Caco-2 (cell line): ENCODE measurements at regions of chr6 and their contacts with region 1.

Region 1: DNA sequence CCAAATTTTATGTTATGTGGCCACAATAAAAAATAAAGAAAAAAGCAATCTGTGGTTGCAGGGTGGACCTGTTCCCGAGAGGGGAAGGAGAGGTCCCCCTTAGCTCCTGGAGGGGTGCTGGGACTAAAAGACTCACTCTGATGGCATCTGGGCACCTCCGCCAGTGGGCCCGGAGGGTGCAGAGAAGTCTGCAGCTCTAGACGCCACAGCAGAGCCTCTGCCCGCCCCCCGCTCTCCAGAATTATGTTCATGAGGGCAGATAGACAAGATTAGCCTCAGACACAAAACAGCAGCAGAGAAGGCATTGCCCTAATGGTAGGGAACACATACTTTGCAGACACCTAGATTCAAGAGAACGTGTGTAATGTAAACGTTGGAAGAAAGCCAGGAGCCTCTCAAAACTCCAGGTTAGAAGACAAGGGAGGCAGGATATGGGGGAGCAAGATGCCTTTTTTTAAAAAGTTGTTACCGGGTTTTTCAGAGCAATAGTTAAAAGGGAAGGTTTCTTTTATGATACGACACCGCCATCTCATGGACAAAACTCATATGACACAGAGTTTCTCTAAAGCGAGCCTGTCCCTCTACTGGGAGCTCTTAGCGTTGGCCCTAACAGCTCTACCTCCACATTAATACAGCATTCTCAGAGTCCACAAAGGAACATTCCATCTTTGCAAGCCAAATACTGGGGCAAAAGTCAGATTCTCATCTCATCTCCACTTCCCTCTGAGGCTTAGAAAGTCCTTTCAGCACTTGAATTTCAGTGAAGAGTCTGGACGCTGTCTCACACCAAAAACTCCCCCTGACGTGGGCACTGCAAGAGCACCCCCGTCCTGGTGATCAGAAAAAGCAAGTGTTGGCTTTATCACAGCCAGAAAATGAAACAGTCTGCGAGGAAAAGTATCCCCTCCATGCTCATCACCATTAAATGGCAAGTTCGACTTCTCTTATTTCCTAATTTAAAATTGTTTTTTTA is 47.2 kb downstream of the FOXF2 start:
- DNase-seq: peak; percentile 50 to 75
- H3K4me3 ChIP-seq: no peak overlapping the region
- H3K4me3 Mint-ChIP-seq: no peak overlapping the region
- H3K27ac Mint-ChIP-seq: no peak overlapping the region
- H3K4me1 ChIP-seq: no peaks in the 10 kb centered on the region
- H3K4me1 Mint-ChIP-seq: peaks cover 14% of the 10 kb centered on the region
- H3K27me3 ChIP-seq: no peaks in the 10 kb centered on the region; the same call in 1 of the 2 replicates
- H3K27me3 Mint-ChIP-seq: peaks cover 19% of the 10 kb centered on the region
- CTCF ChIP-seq: peak; percentile 76 to 84

Region 2: GRCh38 chr6:593139-593906 is 843.3 kb before region 1 on chr6:
- CTCF ChIA-PET with region 1: interaction called, 4 read pairs
- POLR2A ChIA-PET with region 1: no interaction called
- intact Hi-C with region 1: loop called (anchors 10 kb)
- DNase-seq: peak; percentile 41 to 55
- H3K4me3 ChIP-seq: no peak overlapping the region
- H3K4me3 Mint-ChIP-seq: no peak overlapping the region
- H3K27ac Mint-ChIP-seq: no peak overlapping the region
- H3K4me1 ChIP-seq: no peaks in the 10 kb centered on the region
- H3K4me1 Mint-ChIP-seq: no peaks in the 10 kb centered on the region
- H3K27me3 ChIP-seq: no peaks in the 10 kb centered on the region
- H3K27me3 Mint-ChIP-seq: no peaks in the 10 kb centered on the region
- CTCF ChIP-seq: peak; percentile 47 to 52

Region 3: GRCh38 chr6:797479-798077 is 639.0 kb before region 1 on chr6:
- CTCF ChIA-PET with region 1: interaction called, 3 read pairs
- POLR2A ChIA-PET with region 1: no interaction called
- intact Hi-C with region 1: loop called (anchors 5 kb)
- DNase-seq: peak in 1 of 2 experiments; percentile 60
- H3K4me3 ChIP-seq: no peak overlapping the region
- H3K4me3 Mint-ChIP-seq: no peak overlapping the region
- H3K27ac Mint-ChIP-seq: no peak overlapping the region
- H3K4me1 ChIP-seq: no peaks in the 10 kb centered on the region
- H3K4me1 Mint-ChIP-seq: no peaks in the 10 kb centered on the region
- H3K27me3 ChIP-seq: no peaks in the 10 kb centered on the region
- H3K27me3 Mint-ChIP-seq: no peaks in the 10 kb centered on the region
- CTCF ChIP-seq: peak; percentile 73 to 74

Region 4: DNA sequence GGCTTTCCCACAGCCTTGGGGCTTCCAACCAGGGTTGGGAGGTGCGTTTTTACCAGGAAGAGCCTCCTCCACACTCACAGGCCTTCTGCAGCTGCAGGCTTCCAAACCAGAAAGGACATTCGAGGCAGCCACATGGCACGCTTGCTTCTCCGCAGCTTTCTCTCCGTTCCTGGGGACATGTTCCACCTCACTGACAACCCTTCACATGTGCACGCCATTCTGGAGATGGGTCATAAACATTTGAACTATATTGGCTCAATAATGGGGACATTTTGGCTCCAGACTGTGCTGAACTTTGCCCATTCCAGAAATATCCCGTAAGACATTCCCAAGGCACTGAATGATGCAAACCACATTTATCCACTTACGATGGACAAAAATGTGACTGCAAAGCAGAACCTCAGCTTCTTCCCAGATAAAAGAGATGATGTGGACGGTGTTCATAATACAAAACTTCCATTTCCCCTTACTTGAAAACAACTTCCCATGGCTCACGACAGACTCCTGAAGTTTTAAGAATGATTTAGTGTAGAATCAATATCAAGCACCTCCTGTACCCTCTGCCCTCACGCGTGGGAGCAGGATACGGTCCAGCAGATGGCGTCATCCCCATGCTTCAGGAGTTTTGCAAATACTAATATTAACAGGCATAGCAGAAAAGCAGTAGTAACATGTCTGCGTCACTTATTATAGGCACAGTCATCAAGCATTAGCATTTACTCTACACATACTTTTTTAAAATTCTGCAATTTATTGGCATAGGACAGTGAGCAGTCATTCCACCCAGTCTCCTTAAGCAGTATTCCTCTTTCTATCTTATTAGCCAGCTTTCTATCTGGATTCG is 72.7 kb before region 1 on chr6:
- CTCF ChIA-PET with region 1: interaction called, 3 read pairs
- POLR2A ChIA-PET with region 1: no interaction called
- intact Hi-C with region 1: loop called (anchors 2 kb)
- DNase-seq: peak in 1 of 2 experiments; percentile 57
- H3K4me3 ChIP-seq: no peak overlapping the region
- H3K4me3 Mint-ChIP-seq: no peak overlapping the region
- H3K27ac Mint-ChIP-seq: no peak overlapping the region
- H3K4me1 ChIP-seq: no peaks in the 10 kb centered on the region
- H3K4me1 Mint-ChIP-seq: no peaks in the 10 kb centered on the region
- H3K27me3 ChIP-seq: no peaks in the 10 kb centered on the region
- H3K27me3 Mint-ChIP-seq: peaks cover 5% of the 10 kb centered on the region
- CTCF ChIP-seq: peak; percentile 42 to 55

Region 5: GRCh38 chr6:1424306-1424928 is 12.2 kb before region 1 on chr6:
- CTCF ChIA-PET with region 1: interaction called, 10 read pairs
- POLR2A ChIA-PET with region 1: no interaction called
- intact Hi-C with region 1: no loop called
- DNase-seq: peak; percentile 52 to 58
- H3K4me3 ChIP-seq: no peak overlapping the region
- H3K4me3 Mint-ChIP-seq: peak overlapping the region; percentile 14
- H3K27ac Mint-ChIP-seq: no peak overlapping the region
- H3K4me1 ChIP-seq: no peaks in the 10 kb centered on the region
- H3K4me1 Mint-ChIP-seq: no peaks in the 10 kb centered on the region
- H3K27me3 ChIP-seq: no peaks in the 10 kb centered on the region
- H3K27me3 Mint-ChIP-seq: peaks cover 3% of the 10 kb centered on the region
- CTCF ChIP-seq: peak; percentile 55 to 82